IMR-90 (cell line): ENCODE measurements at regions of chr9 and their contacts with region 1.

Region 1: GRCh38 chr9:134135343-134136118 is at the start of gene WDR5:
- DNase-seq: peak; percentile 85
- ATAC-seq: peak; percentile 86
- H3K4me3 ChIP-seq: peak within 1 kb of the TSS; percentile 81
- H3K27ac ChIP-seq: peak within 1 kb of the TSS; percentile 71
- H3K4me1 ChIP-seq: peaks cover 18% of the 10 kb centered on the region
- H3K27me3 ChIP-seq: no peaks in the 10 kb centered on the region
- CTCF ChIP-seq: 0 out of 2 replicates have a peak, but pooled peaks have one; percentile 3
- POLR2A ChIP-seq: no peak
- RAD21 ChIP-seq: no peak
- total RNA-seq, gene WDR5: 18.3 and 19.2 TPM in 2 replicates

Region 2: GRCh38 chr9:133990366-133991213 is 144.9 kb before region 1 on chr9:
- CTCF ChIA-PET with region 1: no interaction called
- POLR2A ChIA-PET with region 1: no interaction called
- dilution Hi-C with region 1: no loop called
- in situ Hi-C with region 1: no loop called
- intact Hi-C with region 1: no loop called
- DNase-seq: peak; percentile 85
- ATAC-seq: peak; percentile 19
- H3K4me3 ChIP-seq: peak overlapping the region; percentile 73
- H3K27ac ChIP-seq: peak overlapping the region; percentile 75
- H3K4me1 ChIP-seq: peaks cover 11% of the 10 kb centered on the region; the same call in 1 of the 2 replicates
- H3K27me3 ChIP-seq: no peaks in the 10 kb centered on the region
- CTCF ChIP-seq: no peak
- POLR2A ChIP-seq: peak; percentile 68
- RAD21 ChIP-seq: no peak

Region 3: DNA sequence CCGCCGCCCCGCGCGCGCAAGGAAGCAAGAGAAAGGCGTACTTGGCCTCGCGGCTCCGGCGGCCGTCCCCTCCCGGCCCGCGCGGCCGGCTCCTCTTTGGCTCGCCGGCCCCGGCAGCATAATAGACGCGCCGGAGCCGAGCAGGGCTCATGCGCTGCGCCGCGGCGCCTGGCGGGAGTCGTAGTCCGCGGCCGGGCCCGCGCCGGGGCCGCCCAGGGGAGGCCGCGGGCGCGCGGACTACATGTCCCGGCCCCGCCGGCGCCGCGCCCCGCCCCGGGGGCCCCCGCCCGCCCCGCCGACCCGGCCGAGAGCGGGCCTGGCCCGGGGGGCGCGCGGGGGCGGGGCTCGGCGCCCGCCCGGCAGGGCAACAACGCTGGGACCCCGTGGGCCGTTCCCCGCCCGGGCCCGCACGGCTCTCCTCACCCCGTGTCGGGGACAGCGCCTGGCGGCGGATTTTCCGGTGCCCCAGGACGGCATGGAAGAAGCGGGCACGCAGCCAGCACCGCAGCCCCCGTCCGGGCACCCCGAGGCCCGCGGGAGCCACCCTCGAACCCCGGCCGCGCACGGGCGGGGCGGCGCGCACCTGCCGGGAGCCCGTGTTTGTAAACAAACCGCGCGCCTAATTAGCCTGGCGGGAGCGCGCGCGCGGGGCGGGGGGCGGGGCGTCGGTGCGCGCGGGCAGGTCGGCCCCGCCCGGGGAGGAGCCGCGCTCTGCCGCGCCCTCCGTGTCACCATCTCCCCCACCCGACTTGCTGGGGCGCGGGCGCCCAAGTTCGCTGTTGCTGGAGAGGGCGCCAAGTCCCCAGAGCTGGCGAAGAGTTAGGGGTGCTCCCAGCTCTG is 67.4 kb before region 1 on chr9 and contains the start of gene BRD3:
- CTCF ChIA-PET with region 1: no interaction called
- POLR2A ChIA-PET with region 1: no interaction called
- dilution Hi-C with region 1: no loop called
- in situ Hi-C with region 1: no loop called
- intact Hi-C with region 1: loop called (anchors 2 kb)
- DNase-seq: peak; percentile 88
- ATAC-seq: peak; percentile 91
- H3K4me3 ChIP-seq: peak within 1 kb of the TSS; percentile 96
- H3K27ac ChIP-seq: peak within 1 kb of the TSS; percentile 81
- H3K4me1 ChIP-seq: peaks cover 7% of the 10 kb centered on the region
- H3K27me3 ChIP-seq: peaks cover 29% of the 10 kb centered on the region
- CTCF ChIP-seq: no peak
- POLR2A ChIP-seq: peak; percentile 51; the same call in 1 of the 2 replicates
- RAD21 ChIP-seq: no peak
- total RNA-seq, gene BRD3: 2.2 and 3.6 TPM in 2 replicates

Region 4: GRCh38 chr9:134088063-134088725 is 47.3 kb before region 1 on chr9:
- CTCF ChIA-PET with region 1: no interaction called
- POLR2A ChIA-PET with region 1: no interaction called
- dilution Hi-C with region 1: no loop called
- in situ Hi-C with region 1: no loop called
- intact Hi-C with region 1: no loop called
- DNase-seq: no peak
- ATAC-seq: no peak
- H3K4me3 ChIP-seq: no peak overlapping the region
- H3K27ac ChIP-seq: no peak overlapping the region
- H3K4me1 ChIP-seq: no peaks in the 10 kb centered on the region
- H3K27me3 ChIP-seq: peaks cover 13% of the 10 kb centered on the region
- CTCF ChIP-seq: no peak
- POLR2A ChIP-seq: no peak
- RAD21 ChIP-seq: no peak

Region 5: DNA sequence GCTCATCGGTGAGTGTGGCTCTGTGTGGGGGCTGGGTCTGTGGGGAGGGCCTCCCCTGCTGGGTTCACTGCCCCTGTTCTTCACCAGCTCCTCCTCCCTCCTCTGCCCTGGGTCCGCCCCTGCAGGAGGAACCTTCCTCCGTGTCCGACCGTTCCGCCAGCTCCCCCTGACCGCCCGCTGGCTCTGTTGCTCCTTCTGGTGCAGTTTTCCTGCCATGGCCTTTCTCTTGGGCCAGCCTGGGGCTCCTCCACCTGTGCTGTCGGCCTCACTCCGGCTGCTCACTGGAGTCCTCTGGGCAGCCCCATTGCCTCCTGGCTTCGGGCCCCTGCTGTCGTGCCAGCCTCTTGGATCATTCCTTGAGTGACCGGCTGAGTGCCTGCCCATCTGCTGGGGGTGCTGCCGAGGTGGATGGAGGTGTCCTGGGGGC is 16.5 kb after region 1 on chr9:
- CTCF ChIA-PET with region 1: no interaction called
- POLR2A ChIA-PET with region 1: no interaction called
- dilution Hi-C with region 1: no loop called
- in situ Hi-C with region 1: no loop called
- intact Hi-C with region 1: no loop called
- DNase-seq: no peak
- ATAC-seq: no peak
- H3K4me3 ChIP-seq: no peak overlapping the region
- H3K27ac ChIP-seq: no peak overlapping the region
- H3K4me1 ChIP-seq: no peaks in the 10 kb centered on the region
- H3K27me3 ChIP-seq: no peaks in the 10 kb centered on the region
- CTCF ChIP-seq: no peak
- POLR2A ChIP-seq: no peak
- RAD21 ChIP-seq: no peak

Region 6: DNA sequence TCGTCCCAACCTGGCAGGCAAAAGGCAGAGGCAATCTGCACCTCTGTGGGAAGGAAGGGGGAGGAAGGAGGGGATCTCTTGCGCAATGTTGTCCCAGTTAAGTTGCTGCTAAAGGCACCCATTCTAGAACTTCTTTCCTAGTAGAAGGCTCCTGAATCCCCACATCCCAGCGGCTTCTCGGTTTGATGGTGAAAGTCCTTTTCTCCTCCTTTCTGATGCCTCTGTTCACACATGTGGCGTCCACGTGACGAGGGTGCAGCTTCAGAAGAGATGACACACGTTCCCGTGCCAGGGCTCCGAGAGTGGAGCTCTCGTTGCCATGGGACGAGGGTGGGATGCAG is 648.1 kb after region 1 on chr9:
- CTCF ChIA-PET with region 1: no interaction called
- POLR2A ChIA-PET with region 1: no interaction called
- dilution Hi-C with region 1: no loop called
- in situ Hi-C with region 1: no loop called
- intact Hi-C with region 1: no loop called
- DNase-seq: no peak
- ATAC-seq: no peak
- H3K4me3 ChIP-seq: no peak overlapping the region
- H3K27ac ChIP-seq: no peak overlapping the region
- H3K4me1 ChIP-seq: peaks cover 4% of the 10 kb centered on the region
- H3K27me3 ChIP-seq: no peaks in the 10 kb centered on the region
- CTCF ChIP-seq: no peak
- POLR2A ChIP-seq: no peak
- RAD21 ChIP-seq: no peak